ENCODE measurements at regions of chr15 and their contacts with region 1.

Region 1: DNA sequence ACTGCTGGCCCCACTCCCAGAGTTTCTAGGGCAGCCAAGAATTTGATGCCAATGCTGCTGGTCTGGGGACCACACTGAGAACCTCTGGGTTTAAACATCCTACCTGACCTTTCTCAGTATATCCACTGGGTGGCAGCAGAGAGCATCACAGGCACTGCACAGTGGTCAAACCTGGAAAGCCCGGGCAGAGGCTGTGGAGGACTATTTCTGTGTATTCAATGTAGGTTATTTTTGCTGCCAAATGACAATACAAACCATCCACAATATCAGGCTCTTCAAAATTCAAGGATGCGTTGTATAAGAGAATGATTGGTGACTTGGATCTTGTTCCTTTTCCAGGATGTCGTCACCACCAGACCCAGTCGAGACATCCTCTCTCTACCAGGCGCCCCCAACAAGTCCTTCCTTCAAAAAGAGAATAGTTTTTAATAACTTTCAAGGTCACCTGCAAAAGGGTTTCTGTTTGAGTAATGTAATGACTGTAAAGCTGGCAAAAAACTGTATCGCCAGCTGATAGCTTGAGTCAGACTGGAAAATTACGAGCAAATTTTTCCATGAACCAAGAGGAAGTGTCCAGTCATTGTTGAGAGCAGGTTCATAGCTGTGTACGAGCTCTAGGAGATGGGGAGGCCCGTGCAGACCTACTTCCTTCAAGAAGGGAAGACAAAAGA is 30.5 kb upstream of the MYZAP start:
- DNase-seq: peak; percentile 72
- H3K4me3 Mint-ChIP-seq: no peak overlapping the region
- H3K27ac Mint-ChIP-seq: peak overlapping the region; percentile 28
- H3K4me1 Mint-ChIP-seq: peaks cover 42% of the 10 kb centered on the region
- H3K27me3 Mint-ChIP-seq: no peaks in the 10 kb centered on the region

Region 2: GRCh38 chr15:57586661-57587424 is 25.7 kb after region 1 on chr15:
- CTCF ChIA-PET with region 1: interaction called, 5 read pairs
- intact Hi-C with region 1: loop called (anchors 1 kb)
- DNase-seq: no peak
- H3K4me3 Mint-ChIP-seq: no peak overlapping the region
- H3K27ac Mint-ChIP-seq: peak overlapping the region; percentile 78
- H3K4me1 Mint-ChIP-seq: peaks cover 39% of the 10 kb centered on the region
- H3K27me3 Mint-ChIP-seq: peaks cover 6% of the 10 kb centered on the region

Region 3: DNA sequence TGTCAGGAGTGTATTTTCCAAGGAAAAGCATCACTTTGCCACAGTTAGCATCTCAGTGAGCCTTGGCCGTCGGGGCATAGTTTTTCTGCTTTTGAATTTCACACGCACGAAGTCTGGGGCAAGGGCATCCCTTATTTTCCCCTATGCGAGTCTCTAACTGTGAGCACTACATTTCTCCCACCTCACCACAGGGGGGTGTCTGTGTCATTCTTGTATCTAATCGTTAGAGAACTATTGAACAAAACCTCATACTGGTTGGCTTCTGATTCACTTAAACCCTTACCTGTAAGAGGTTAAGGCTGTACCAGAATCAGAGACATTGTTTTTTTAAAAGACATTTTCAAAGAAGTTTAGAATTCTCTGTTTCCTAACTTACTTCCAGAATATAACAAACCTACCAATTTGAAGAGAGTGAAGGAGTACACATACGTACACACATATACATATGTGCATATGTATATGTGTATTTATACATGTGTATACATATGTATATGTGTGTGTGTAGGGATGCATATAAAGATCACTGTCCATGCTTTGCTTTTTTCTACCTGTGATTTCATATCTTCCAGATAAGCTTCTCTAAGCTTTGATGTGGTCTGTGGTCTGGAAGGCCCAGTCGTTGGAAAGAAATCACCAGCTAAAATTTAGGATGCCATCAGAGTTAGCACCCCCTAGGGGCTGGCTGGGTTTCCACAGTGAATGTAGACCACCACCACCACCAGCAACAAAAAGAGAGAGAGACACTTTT is 79.9 kb after region 1 on chr15:
- CTCF ChIA-PET with region 1: interaction called, 10 read pairs
- intact Hi-C with region 1: loop called (anchors 1 kb)
- DNase-seq: peak; percentile 28
- H3K4me3 Mint-ChIP-seq: no peak overlapping the region
- H3K27ac Mint-ChIP-seq: no peak overlapping the region
- H3K4me1 Mint-ChIP-seq: peaks cover 7% of the 10 kb centered on the region
- H3K27me3 Mint-ChIP-seq: no peaks in the 10 kb centered on the region

Region 4: DNA sequence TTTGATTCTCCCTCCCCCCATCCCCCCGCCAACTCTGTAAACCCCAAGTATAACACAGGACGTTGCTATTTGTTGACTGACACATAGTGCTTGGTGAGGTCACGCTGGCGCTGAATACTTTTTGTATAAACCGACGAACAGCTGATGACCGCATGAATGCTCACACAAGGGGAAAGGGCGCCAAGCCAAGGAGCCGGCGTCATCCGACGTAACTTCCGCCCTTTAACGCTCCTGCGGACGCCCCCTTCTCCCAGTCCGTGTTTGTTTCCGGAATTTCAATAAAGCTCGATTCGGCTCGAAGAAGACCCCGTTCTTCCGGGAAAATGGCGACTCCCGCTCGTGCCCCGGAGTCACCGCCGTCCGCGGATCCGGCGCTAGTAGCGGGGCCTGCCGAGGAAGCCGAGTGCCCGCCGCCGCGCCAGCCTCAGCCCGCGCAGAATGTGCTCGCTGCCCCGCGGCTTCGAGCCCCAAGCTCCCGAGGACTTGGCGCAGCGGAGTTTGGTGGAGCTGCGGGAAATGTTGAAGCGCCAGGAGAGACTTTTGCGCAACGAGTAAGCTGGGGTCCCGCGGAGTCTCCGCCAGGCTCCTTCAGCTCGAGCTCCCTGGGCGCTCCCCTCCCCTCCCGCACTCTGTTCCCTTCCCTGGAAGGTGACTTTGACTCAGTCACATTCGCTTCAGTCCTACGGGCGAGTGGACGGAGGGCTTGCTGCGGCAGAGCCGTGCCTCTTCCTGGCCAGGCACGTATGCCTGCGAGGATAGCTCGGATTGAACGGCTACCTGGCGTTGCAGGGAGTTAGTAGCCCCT is 145.4 kb after region 1 on chr15 and contains the start of gene POLR2M:
- CTCF ChIA-PET with region 1: interaction called, 8 read pairs
- intact Hi-C with region 1: loop called (anchors 1 kb)
- DNase-seq: peak; percentile 98
- H3K4me3 Mint-ChIP-seq: peak within 1 kb of the TSS; percentile 90
- H3K27ac Mint-ChIP-seq: peak within 1 kb of the TSS; percentile 93
- H3K4me1 Mint-ChIP-seq: peaks cover 79% of the 10 kb centered on the region
- H3K27me3 Mint-ChIP-seq: no peaks in the 10 kb centered on the region
- total RNA-seq, gene POLR2M: 107 to 114 TPM

Region 5: DNA sequence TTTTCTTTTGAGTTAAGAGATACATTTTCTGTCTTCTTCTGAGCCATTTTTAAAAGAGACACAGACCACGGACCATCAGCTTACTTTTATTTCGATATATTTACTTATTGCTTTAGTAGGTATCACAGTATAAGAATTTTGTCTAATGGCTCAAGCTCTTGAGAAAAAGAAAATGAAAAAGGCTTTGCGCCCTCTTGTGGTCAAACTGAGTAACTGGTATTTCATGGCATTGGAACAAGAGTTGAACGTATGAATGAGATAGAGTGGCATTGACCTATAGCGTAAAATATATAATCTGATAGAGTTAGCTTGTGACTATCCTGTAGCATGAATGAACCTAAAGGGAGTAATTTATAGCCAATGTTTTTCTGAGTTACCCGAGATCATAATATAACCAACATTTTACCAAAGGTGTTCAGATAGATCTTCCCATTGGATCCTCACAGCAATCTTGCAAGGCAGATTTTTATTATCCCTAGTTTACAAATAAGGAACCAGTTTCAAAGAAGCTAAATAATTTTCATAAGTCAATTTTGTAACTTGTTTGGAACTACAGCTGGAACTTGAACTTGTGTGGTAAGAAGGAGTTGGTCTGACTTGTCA is 300.0 kb after region 1 on chr15:
- CTCF ChIA-PET with region 1: interaction called, 42 read pairs
- intact Hi-C with region 1: loop called (anchors 1 kb)
- DNase-seq: peak; percentile 58
- H3K4me3 Mint-ChIP-seq: no peak overlapping the region
- H3K27ac Mint-ChIP-seq: no peak overlapping the region
- H3K4me1 Mint-ChIP-seq: peaks cover 3% of the 10 kb centered on the region
- H3K27me3 Mint-ChIP-seq: peaks cover 9% of the 10 kb centered on the region

Region 6: DNA sequence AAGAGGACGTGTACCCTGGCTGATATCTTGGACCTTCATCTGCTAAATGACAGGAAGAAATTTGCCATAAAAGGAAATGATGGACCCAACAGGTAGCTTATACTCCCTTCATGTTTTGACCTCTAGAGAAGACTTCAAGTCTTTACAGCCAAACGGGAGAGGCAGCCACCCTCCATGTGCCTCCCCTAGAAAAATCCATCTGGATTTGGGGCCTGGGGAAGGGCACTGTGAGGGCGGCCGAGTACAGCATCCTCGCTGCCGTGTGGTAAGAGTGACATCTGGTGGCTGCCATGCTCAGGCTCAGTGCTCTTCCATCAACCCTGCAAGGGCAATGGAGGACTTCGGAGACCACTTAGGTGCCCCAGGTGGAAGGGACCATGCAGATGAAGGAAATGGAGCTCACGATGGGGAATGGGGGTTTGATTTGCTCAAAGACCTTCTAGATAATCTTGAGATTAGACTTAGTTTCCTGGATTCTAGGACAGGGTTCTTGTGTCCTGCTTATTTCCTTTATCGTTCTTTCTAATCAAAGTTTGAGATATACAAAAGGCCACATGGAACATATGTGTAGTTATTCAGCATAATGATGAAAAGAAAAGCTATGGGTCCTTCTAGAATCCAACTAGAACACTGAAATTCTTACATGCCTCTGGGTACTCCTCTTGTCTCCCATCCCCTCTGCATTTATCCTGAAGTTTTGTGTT is 621.4 kb after region 1 on chr15:
- CTCF ChIA-PET with region 1: no interaction called
- intact Hi-C with region 1: loop called (anchors 5 kb)
- DNase-seq: peak; percentile 55
- H3K4me3 Mint-ChIP-seq: no peak overlapping the region
- H3K27ac Mint-ChIP-seq: no peak overlapping the region
- H3K4me1 Mint-ChIP-seq: peaks cover 11% of the 10 kb centered on the region
- H3K27me3 Mint-ChIP-seq: peaks cover 18% of the 10 kb centered on the region

Region 7: GRCh38 chr15:58933281-58934113 is 1372.3 kb after region 1 on chr15 and contains the start of gene SLTM:
- CTCF ChIA-PET with region 1: no interaction called
- intact Hi-C with region 1: no loop called
- DNase-seq: peak; percentile 92
- H3K4me3 Mint-ChIP-seq: peak within 1 kb of the TSS; percentile 93
- H3K27ac Mint-ChIP-seq: peak within 1 kb of the TSS; percentile 99
- H3K4me1 Mint-ChIP-seq: peaks cover 23% of the 10 kb centered on the region
- H3K27me3 Mint-ChIP-seq: no peaks in the 10 kb centered on the region
- total RNA-seq, gene SLTM: 52.0 to 56.0 TPM